Aorta (tissue), 5 donors: ENCODE measurements at regions of chr17 and their contacts with region 1.

Region 1: DNA sequence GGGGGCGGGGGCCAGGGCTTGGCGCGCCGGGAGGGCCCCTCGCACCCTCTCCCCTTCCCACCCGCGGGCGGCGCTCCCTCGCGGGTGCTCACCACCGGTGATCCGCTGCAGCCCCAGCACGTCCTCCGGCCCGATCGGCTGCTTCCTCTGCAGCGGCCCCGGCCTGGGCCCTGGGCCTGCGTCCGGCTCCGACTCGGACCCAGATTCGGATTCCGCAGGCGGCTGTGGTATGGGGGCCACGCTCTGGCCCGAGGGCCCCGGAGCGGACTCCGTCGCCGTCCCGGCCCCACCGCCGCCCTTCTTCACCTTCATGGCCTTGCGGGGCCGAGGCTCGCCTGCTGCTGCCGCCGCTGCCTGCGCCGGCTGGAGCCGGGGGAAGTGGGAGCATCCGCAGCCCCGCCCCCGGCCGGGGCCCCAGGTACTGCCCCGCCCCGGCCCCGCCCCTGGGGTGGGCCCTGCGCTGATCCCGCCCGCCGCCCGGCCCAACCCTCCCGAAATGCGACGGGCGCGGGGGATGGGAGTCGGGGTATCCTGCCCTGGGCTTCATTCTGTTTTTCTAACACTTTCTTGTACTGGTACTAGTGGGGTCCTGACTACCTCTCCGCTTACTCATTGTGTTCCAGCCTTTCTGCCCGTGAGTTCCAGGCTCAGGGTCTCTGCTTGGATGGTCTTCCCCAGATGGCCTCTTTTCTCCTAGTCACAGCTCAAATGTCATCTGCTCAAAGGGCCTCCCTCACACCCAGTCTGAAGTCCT is at the start of gene UNC119:
- DNase-seq: peak; percentile 80 to 93
- ATAC-seq: peak; percentile 91
- H3K4me3 ChIP-seq: peak within 1 kb of the TSS; percentile 71 to 86
- H3K27ac ChIP-seq: peak within 1 kb of the TSS in 1 of 2 donors; percentile 29
- H3K4me1 ChIP-seq: no peaks in the 10 kb centered on the region
- H3K27me3 ChIP-seq: no peaks in the 10 kb centered on the region
- total RNA-seq, gene UNC119: 17.4 to 25.7 TPM

Region 2: GRCh38 chr17:28598799-28599310 is 46.4 kb after region 1 on chr17 and contains the start of gene SPAG5:
- intact Hi-C with region 1: loop called (anchors 2 to 5 kb)
- DNase-seq: peak; percentile 95 to 97
- ATAC-seq: peak; percentile 99
- H3K4me3 ChIP-seq: peak within 1 kb of the TSS; percentile 29 to 77
- H3K27ac ChIP-seq: peak within 1 kb of the TSS; percentile 23 to 94
- H3K4me1 ChIP-seq: no peaks in the 10 kb centered on the region
- H3K27me3 ChIP-seq: no peaks in the 10 kb centered on the region
- total RNA-seq, gene SPAG5: 2.2 to 3.6 TPM